ENCODE measurements at regions of chr10 and their contacts with region 1.

Region 1: DNA sequence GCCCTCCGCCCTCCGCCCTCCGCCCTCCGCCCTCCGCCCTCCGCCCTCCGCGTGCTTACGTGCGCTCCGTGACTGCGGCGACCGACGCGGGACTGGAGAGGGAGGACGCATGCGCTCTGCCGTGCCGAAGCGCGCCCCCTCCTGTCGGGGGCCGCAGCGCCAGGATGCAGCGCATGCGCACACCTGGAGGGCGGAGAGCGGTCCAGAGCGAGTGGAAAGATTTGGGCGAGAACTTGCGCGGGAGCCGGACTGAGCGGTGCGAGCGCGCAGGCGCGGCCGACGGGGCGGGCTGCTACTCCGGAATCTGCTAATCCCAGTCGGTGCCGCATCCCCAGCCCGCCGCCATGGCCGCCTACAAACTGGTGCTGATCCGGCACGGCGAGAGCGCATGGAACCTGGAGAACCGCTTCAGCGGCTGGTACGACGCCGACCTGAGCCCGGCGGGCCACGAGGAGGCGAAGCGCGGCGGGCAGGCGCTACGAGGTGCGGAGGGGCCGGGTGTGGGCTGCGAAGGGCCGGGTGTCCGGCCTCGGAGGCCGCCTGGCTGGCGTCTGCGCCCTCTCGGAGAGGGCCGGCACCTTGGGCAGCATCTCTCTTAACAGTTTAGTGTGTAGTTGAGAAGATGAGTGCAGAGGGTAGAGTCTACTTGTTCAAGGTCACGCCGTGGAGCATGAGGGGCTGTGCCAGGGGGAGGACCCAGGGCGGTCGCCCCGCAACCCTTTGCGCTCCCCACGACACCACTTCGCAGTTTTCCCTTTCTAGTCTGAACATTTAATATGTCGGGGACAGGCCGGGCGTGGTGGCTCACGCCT is at the start of gene PGAM1:
- DNase-seq: peak; percentile 92 to 94
- ATAC-seq: peak; percentile 94 to 95
- H3K4me3 ChIP-seq: peak within 1 kb of the TSS; percentile 73 to 98 (median 83)
- H3K27ac ChIP-seq: peak within 1 kb of the TSS; percentile 80 to 91 (median 86)
- H3K4me1 ChIP-seq: peaks cover 18 to 20% of the 10 kb centered on the region in 2 donors
- H3K27me3 ChIP-seq: no peaks in the 10 kb centered on the region
- CTCF ChIP-seq: peak in 4 of 5 experiments; percentile 37 to 70 (median 58)
- POLR2A ChIP-seq: peak; percentile 70 to 75
- total RNA-seq, gene PGAM1: 41.0 to 72.1 (median 62.2) TPM

Region 2: DNA sequence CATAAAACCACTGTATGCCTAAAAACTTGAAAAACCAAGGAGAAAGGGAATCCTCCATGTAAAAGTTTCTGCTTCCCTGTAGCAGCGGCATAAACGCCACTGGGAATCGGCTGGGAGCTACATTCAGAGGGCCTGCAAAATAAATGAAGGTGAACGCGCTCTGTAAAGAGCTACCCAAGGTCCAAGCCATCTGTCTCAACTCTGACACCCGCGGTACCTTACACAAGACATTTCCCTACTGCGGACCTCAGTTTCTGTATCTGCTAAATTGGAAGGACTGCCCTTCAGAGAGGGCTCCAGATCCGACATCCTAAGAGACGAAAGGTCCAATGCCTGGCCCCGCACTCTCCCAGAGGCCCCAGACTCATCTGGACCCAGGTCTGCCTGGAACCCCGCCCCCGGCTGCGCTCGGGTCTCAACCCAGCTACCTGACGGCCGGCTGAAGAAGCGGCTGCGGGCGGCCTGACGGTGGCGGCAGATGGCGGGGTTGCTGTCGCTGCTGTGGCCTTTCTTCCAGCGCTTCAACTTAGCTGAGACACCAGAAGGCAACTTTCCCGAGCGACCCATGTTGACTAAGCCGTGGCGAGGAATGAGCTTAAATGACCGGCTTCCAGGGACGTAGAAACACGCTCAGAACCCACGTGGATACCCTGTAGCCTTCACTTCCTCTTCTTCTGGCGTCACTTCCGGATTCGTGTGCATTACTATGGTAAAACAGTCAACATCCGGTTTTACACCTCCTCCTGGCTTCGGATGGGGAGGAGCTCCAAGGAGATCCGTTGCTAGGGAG is 25.3 kb before region 1 on chr10 and contains the start of gene RRP12:
- in situ Hi-C with region 1: no loop called
- intact Hi-C with region 1: loop called (anchors 2 kb)
- DNase-seq: peak; percentile 87 to 88
- ATAC-seq: peak; percentile 97 to 99
- H3K4me3 ChIP-seq: peak within 1 kb of the TSS; percentile 72 to 97 (median 94)
- H3K27ac ChIP-seq: peak within 1 kb of the TSS; percentile 89 to 97 (median 94)
- H3K4me1 ChIP-seq: peaks cover 14 to 15% of the 10 kb centered on the region in 2 donors
- H3K27me3 ChIP-seq: no peaks in the 10 kb centered on the region
- CTCF ChIP-seq: no peak
- POLR2A ChIP-seq: peak; percentile 79
- total RNA-seq, gene RRP12: 41.9 to 61.4 (median 49.9) TPM

Region 3: GRCh38 chr10:97445722-97446639 is 19.8 kb after region 1 on chr10 and contains the starts of genes EXOSC1 and ZDHHC16:
- in situ Hi-C with region 1: no loop called
- intact Hi-C with region 1: loop called (anchors 1 kb)
- DNase-seq: peak; percentile 87
- ATAC-seq: peak; percentile 100
- H3K4me3 ChIP-seq: peak within 1 kb of the TSS; percentile 81 to 98 (median 90)
- H3K27ac ChIP-seq: peak within 1 kb of the TSS; percentile 69 to 79 (median 72)
- H3K4me1 ChIP-seq: peaks cover 20 to 40% of the 10 kb centered on the region in 2 donors
- H3K27me3 ChIP-seq: no peaks in the 10 kb centered on the region
- CTCF ChIP-seq: peak in 1 of 5 experiments; percentile 14
- POLR2A ChIP-seq: peak; percentile 50 to 57
- total RNA-seq, gene EXOSC1: 18.6 to 34.5 (median 26.8) TPM
- total RNA-seq, gene ZDHHC16: 25.0 to 34.5 (median 31.6) TPM

Region 4: GRCh38 chr10:97456034-97456685 is 30.0 kb after region 1 on chr10:
- in situ Hi-C with region 1: no loop called
- intact Hi-C with region 1: no loop called
- DNase-seq: no peak
- ATAC-seq: no peak
- H3K4me3 ChIP-seq: no peak overlapping the region
- H3K27ac ChIP-seq: no peak overlapping the region
- H3K4me1 ChIP-seq: peaks cover 0 to 3% of the 10 kb centered on the region in 2 donors
- H3K27me3 ChIP-seq: no peaks in the 10 kb centered on the region
- CTCF ChIP-seq: no peak
- POLR2A ChIP-seq: no peak

Region 5: DNA sequence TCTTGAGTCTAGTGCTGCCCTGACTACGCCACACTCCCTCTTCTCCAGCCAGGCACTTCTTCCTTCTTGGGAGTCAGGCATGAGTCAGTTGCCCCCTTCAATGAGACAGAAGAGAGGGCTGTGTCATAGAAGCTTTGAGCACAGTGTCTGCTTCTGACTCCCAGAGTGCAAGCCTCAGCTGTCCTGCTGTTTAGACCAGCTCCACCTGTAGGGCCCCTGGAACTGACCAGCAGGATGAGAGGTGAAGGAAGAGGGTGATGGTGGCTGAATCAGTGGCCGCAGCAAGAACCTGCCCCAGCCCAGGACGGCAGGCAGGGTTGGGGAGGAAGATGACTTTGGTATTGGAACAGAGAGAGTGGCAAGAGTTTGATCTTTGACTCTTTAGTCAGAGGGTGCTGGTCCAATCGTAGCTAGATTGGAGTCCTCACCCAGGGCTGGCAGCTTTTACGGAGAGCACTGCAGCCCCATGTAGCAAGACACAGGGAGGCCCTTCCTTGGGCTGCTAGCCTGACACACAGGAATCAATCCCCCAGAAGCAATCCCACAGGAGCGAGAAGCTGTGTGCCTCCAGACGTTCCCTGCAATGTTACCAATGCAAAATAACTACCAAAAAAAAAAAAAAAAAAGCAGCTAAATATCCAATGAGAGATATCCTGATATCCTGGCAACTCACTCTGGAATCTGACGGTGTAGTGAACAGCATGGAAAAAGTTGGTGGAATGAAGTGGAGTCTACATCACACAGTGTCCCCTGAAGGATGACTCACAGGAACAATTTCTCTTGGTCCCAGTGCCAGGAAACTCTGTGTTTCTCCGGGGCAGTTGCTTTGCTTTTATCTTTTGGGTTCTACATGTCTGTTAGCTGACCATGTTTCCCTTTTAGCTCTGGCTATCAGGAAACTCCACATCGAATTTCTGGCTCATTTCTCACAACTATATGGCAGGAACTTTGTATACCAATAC is 170.2 kb after region 1 on chr10:
- in situ Hi-C with region 1: no loop called
- intact Hi-C with region 1: no loop called
- DNase-seq: peak; percentile 76 to 85
- ATAC-seq: peak; percentile 90 to 95
- H3K4me3 ChIP-seq: no peak overlapping the region
- H3K27ac ChIP-seq: peak overlapping the region; percentile 88 to 94 (median 92)
- H3K4me1 ChIP-seq: peaks cover 46 to 67% of the 10 kb centered on the region in 2 donors
- H3K27me3 ChIP-seq: no peaks in the 10 kb centered on the region
- CTCF ChIP-seq: no peak
- POLR2A ChIP-seq: peak in 1 of 2 donors; percentile 39

Region 6: GRCh38 chr10:97632949-97633884 is 207.0 kb after region 1 on chr10 and contains the start of gene MORN4:
- in situ Hi-C with region 1: no loop called
- intact Hi-C with region 1: loop called (anchors 10 kb)
- DNase-seq: peak; percentile 92 to 93
- ATAC-seq: peak; percentile 99
- H3K4me3 ChIP-seq: peak within 1 kb of the TSS; percentile 65 to 94 (median 84)
- H3K27ac ChIP-seq: peak within 1 kb of the TSS; percentile 69 to 76 (median 74)
- H3K4me1 ChIP-seq: peaks cover 8% of the 10 kb centered on the region in 2 donors
- H3K27me3 ChIP-seq: no peaks in the 10 kb centered on the region
- CTCF ChIP-seq: no peak
- POLR2A ChIP-seq: no peak
- total RNA-seq, gene MORN4: 0.51 to 8.7 (median 2.1) TPM

Measured in gastrocnemius medialis (tissue), 4 donors.